ENCODE measurements at regions of chr20 and their contacts with region 1.

Region 1: GRCh38 chr20:42530822-42531448 is 658.8 kb downstream of the PTPRT start:
- DNase-seq: no peak

Region 2: GRCh38 chr20:41938353-41938752 is 592.6 kb before region 1 on chr20:
- intact Hi-C with region 1: no loop called
- DNase-seq: no peak

Region 3: GRCh38 chr20:41955999-41956705 is 574.8 kb before region 1 on chr20:
- intact Hi-C with region 1: loop called (anchors 5 kb)
- DNase-seq: no peak

Region 4: DNA sequence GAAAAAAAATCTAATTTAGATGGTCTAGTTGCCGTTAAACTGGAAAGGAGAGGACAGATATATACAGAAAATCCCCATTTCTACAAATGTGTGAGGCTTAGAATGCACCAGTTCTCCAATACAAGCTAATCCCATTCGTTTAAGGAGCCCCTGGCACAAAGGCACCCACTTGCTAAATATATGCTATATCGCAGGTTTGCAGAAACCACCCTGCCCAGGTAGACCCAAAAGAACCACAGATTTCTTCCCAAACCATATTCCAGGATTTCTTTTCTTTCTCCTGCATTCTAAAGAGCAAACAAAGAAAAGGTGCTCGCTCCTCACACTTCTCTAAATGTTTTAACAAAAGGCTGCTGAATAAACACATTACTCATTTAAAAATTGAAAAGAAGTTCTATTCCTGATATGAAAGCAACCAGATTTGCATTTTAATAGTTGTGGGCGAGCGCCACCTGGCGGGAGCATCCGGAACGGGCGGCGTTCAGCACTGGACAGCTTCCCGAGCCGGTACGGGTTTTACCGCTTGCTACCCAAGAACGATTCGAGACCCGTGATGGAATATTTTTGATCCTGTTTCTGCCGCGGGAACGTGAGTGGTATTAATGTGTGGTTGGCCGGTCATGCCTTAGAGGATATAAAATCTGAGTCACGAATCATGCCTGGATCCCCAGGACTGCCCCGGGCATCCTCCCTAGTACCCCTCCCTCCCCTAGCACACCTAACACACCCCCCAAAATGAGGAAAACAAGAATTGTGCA is 656.7 kb after region 1 on chr20:
- intact Hi-C with region 1: loop called (anchors 10 kb)
- DNase-seq: no peak